ENCODE measurements at regions of chr15 and their contacts with region 1.

Region 1: GRCh38 chr15:22838292-22839042 is at the start of gene NIPA2:
- DNase-seq: peak; percentile 98 to 99
- H3K4me3 ChIP-seq: peak within 1 kb of the TSS; percentile 67 to 86 (median 75)
- H3K27ac ChIP-seq: peak within 1 kb of the TSS; percentile 79 to 87 (median 84)
- H3K4me1 ChIP-seq: peaks cover 17 to 19% of the 10 kb centered on the region in 2 donors
- H3K27me3 ChIP-seq: no peaks in the 10 kb centered on the region
- CTCF ChIP-seq: peak in 1 of 6 experiments; percentile 11
- POLR2A ChIP-seq: peak; percentile 22 to 91
- total RNA-seq, gene NIPA2: 50.3 to 67.2 (median 56.4) TPM

Region 2: DNA sequence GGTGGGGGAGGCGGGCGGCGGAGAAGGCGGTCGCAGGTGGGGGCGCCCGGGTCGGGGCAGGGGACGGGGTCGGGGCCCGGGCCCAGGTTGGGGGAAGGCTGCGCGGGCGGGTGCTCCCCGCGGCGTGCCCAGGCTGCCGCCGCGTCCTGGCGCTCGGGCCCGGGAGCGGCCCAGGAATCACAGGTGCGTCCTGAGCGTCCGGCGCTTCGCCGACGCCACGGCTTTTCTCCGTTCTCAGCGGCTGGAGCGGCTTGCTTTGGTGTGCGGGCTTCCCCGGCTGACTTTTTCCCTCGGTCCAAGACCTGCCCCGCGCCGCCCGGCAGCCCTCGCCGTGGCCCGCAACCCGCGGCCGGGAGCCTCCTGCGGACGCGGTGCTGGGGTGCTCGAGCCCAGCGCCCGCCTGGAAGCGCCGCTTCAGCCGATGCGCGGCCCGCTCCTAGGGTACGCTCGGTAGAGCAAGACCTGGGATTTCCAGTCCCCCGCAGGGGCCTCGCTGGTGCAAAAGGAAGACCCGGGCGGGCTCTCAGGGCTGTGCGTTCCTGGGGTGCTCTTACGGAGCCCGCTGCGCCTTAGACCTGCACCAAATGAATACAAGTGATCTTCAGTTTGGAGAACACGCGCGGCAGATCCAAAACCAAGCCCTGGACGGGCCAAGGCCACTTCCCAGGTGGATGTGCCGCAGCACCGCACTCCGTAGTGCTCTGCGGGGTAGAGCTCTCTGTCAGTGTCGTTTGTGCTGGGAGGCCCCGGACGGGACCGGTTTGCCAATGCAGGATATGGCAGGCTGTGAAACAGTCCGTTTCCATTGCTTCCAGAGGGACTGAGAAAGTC is 51.4 kb before region 1 on chr15:
- intact Hi-C with region 1: loop called (anchors 5 kb)
- DNase-seq: peak; percentile 35 to 49
- H3K4me3 ChIP-seq: peak overlapping the region; percentile 4 to 81 (median 76)
- H3K27ac ChIP-seq: peak overlapping the region; percentile 62 to 84 (median 65)
- H3K4me1 ChIP-seq: peaks cover 8 to 18% of the 10 kb centered on the region in 2 donors
- H3K27me3 ChIP-seq: no peaks in the 10 kb centered on the region
- CTCF ChIP-seq: no peak
- POLR2A ChIP-seq: no peak

Region 3: DNA sequence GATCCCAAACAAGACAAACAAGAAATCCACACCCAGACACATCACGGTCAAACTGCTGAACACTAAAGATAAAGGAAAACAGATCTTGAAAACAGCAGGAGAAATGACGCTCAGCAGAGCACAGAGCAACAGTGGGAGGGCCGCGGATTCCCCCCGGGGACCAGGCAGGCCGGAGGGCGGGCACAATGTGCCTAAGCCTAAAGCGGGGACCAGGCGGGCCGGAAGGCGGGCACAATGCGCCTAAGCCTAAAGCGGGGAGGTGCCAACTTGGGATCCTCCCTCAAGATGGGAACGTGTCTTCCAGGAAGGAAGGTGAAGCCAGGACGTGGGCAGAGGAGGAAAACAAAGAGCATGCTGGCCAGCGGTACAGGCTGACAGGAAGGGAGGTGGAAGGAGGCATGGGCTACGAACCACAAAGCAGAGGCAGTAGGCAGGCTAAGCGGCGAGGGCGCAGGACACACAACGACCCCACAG is 110.6 kb after region 1 on chr15:
- intact Hi-C with region 1: no loop called
- DNase-seq: peak in 1 of 2 donors; percentile 14
- H3K4me3 ChIP-seq: no peak overlapping the region
- H3K27ac ChIP-seq: peak overlapping the region in 1 of 3 donors; percentile 20
- H3K4me1 ChIP-seq: peaks cover 4 to 19% of the 10 kb centered on the region in 2 donors
- H3K27me3 ChIP-seq: no peaks in the 10 kb centered on the region
- CTCF ChIP-seq: no peak
- POLR2A ChIP-seq: no peak